ENCODE measurements at regions of chr10 and their contacts with region 1.

Region 1: DNA sequence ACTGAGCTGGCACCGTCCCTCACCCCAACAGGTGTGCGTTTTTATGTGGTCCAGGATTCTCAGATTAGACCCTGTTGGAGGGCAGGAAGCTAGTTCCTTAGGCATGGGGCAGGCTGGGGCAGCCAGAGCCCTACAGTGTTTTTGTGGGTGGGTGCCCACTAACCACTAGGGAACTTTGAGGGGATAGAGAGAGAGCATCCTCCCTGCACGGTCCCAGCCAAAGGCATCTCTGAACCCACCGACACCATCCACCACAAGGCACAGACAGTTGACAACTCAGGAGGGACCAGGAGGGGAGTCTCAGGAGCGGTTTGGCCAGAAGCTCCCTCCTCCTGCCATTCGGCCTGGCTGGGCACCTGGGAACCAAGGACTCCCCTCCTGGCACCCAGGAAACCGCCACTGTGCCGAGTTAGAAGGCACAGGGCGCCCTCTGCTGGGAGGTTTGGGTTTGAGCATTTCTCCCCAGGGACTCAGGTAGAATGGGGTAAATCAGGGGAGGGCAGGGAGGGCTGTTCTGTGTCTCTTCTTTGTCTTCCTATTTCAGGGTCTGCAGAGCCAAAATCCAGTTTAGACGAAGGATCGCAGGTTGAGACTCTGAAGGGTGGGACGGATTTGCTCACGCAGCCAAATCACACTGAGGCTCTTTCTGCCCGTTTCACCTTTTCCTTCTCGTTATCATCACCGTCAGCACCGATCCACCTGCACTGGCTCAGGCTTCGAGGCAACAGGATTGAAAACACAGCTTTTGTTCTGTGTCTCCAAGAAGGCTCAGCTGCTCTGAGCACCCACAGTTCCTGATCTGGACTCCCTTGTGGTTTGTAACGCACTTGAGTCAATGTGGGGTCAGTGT is 84.8 kb upstream of the COL13A1 start:
- H3K4me3 ChIP-seq: no peak overlapping the region
- H3K27ac ChIP-seq: no peak overlapping the region
- H3K4me1 ChIP-seq: no peaks in the 10 kb centered on the region
- CTCF ChIP-seq: peak; percentile 70

Region 2: DNA sequence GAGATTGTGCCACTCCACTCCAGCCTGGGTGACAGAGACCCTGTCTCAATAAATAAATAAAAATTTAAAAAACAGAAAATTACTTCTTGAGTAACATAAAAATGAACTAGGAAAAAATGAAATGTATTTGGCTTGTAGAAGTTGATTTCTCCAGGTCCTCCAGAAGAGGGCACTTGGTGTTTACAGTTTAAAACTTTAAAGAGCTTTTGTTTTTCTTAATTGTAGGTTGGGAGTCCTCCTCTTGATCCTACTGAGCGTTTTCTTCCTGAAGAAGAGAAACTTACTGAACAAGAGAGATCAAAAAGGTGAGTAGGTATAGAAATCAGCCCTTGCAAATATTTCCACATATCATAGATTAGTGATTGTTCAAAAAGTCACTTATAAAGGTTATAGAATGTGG is 712.1 kb before region 1 on chr10:
- CTCF ChIA-PET with region 1: interaction called, 10 read pairs
- POLR2A ChIA-PET with region 1: no interaction called
- H3K4me3 ChIP-seq: no peak overlapping the region
- H3K27ac ChIP-seq: no peak overlapping the region
- H3K4me1 ChIP-seq: no peaks in the 10 kb centered on the region
- CTCF ChIP-seq: no peak

Region 3: DNA sequence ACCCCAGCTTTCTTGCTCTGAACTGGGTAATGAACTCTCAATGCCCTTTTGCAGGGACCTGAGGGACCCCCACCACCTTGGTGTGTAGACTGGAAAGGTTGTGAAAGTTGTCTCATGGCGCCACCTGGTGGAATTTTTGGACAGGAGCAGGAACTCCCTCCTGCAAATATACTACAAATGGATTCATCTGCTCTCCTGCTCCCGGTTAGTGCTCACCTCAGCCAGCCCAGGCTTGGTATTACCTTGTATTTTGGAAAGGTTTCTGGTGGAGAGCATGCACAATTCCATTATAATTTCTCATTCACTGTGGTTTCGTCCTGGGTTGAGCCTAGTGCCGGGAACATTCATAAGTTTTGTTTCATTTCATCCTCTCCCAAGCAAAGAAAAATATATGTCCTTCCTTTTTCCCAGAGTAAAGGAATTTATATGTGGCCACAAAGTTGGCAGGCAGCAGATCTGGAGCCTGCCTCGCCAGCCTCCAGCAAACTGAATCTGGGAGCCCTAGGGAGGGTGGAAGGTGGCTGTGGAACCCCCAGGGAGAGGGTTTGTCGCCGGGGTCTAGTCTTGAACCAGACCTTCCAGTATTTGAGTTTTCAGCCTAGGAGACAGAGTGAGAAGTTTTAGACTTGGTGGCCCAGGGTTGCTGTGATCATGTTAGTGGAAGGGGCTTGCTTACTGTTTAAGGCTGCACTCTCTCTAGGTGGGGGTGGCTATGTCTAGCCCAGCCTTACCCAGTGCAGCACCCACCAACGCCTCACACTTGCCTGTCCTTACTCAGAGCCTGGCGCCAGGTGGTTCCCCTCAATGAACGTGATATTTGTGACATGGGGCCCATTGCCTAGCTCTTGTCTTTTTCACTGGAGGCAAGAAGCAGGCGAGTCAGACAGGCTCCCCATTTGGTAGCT is 77.4 kb before region 1 on chr10:
- CTCF ChIA-PET with region 1: interaction called, 190 read pairs
- POLR2A ChIA-PET with region 1: no interaction called
- H3K4me3 ChIP-seq: no peak overlapping the region
- H3K27ac ChIP-seq: no peak overlapping the region
- H3K4me1 ChIP-seq: no peaks in the 10 kb centered on the region
- CTCF ChIP-seq: peak; percentile 66

Region 4: DNA sequence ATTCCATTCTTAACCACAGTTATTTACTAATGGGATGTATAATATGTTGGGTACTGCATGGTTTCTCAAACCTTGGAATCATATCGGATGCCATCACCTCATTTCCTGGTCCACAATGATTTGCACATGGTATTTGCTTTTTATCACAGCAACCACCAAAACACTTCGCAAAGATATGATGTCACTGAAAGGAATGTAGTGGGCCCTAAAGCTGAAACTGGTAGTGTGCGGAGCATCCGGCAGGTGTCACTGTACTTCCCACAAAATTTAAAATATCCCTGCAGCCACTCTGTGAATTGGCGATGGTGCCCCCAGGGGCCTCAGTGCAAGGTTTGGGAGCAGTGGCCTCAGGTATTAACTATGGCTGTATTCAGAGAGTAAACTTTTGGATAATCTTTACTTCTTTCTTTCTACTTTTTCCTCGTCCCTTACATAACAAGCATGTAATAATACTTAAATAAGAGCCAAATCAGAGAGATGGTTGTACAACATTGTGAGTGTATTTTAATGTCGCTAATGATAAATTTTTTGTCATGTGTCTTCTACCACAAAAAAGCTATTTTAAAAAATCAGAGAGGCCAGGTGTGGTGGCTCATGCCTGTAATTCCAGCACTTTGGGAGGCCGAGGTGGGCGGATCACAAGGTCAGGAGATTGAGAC is 20.7 kb before region 1 on chr10:
- CTCF ChIA-PET with region 1: interaction called, 52 read pairs
- POLR2A ChIA-PET with region 1: no interaction called
- H3K4me3 ChIP-seq: no peak overlapping the region
- H3K27ac ChIP-seq: no peak overlapping the region
- H3K4me1 ChIP-seq: no peaks in the 10 kb centered on the region
- CTCF ChIP-seq: no peak

Region 5: GRCh38 chr10:69728335-69728870 is 11.5 kb after region 1 on chr10:
- CTCF ChIA-PET with region 1: interaction called, 46 read pairs
- POLR2A ChIA-PET with region 1: no interaction called
- H3K4me3 ChIP-seq: no peak overlapping the region
- H3K27ac ChIP-seq: no peak overlapping the region
- H3K4me1 ChIP-seq: no peaks in the 10 kb centered on the region
- CTCF ChIP-seq: no peak

Measured in HEK293 (cell line).